GM12878 (cell line): ENCODE measurements at regions of chr2 and their contacts with region 1.

Region 1: DNA sequence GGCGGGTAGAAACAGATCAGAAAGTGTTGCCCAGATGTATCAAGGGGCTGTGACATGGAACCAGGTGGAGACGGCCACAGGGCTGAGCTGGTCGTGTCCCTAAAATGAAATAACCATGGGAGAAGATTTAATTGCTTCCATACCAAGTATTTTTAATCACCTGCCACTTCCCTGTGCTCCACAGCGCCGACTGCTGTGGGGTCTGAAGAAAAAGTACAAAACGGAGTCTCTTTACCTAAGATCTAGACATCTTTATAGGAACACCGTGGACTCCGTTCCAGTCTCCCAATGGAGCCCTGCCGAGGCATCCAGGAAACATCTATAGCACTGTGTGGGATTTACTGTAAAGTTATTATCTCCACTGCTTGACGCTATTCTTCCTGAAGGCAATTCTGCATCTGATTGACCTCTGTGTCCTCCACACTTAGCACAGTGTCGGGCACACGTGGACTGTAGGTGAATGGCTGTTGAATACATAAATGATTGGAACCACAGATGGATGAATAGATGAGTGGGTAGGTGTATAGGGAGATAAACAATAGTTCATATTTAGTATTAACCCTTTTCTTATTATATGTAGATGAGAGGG is 21.6 kb upstream of the GYPC start:
- DNase-seq: no peak
- ATAC-seq: peak; percentile 64
- H3K4me3 ChIP-seq: no peak overlapping the region
- H3K27ac ChIP-seq: no peak overlapping the region
- H3K4me1 ChIP-seq: no peaks in the 10 kb centered on the region
- H3K27me3 ChIP-seq: no peaks in the 10 kb centered on the region
- CTCF ChIP-seq: peak; percentile 61 to 69 (median 67); a peak in 5 of 6 replicates
- EP300 ChIP-seq: no peak
- POLR2A ChIP-seq: no peak
- RAD21 ChIP-seq: peak; percentile 65

Region 2: GRCh38 chr2:126299526-126299925 is 334.8 kb before region 1 on chr2:
- CTCF ChIA-PET with region 1: no interaction called
- POLR2A ChIA-PET with region 1: no interaction called
- RAD21 ChIA-PET with region 1: no interaction called
- SMC1A ChIA-PET with region 1: no interaction called
- in situ Hi-C with region 1: no loop called
- intact Hi-C with region 1: no loop called
- DNase-seq: no peak
- ATAC-seq: no peak
- H3K4me3 ChIP-seq: no peak overlapping the region
- H3K27ac ChIP-seq: no peak overlapping the region
- H3K4me1 ChIP-seq: no peaks in the 10 kb centered on the region
- H3K27me3 ChIP-seq: no peaks in the 10 kb centered on the region
- CTCF ChIP-seq: no peak
- EP300 ChIP-seq: no peak
- POLR2A ChIP-seq: no peak
- RAD21 ChIP-seq: no peak

Region 3: DNA sequence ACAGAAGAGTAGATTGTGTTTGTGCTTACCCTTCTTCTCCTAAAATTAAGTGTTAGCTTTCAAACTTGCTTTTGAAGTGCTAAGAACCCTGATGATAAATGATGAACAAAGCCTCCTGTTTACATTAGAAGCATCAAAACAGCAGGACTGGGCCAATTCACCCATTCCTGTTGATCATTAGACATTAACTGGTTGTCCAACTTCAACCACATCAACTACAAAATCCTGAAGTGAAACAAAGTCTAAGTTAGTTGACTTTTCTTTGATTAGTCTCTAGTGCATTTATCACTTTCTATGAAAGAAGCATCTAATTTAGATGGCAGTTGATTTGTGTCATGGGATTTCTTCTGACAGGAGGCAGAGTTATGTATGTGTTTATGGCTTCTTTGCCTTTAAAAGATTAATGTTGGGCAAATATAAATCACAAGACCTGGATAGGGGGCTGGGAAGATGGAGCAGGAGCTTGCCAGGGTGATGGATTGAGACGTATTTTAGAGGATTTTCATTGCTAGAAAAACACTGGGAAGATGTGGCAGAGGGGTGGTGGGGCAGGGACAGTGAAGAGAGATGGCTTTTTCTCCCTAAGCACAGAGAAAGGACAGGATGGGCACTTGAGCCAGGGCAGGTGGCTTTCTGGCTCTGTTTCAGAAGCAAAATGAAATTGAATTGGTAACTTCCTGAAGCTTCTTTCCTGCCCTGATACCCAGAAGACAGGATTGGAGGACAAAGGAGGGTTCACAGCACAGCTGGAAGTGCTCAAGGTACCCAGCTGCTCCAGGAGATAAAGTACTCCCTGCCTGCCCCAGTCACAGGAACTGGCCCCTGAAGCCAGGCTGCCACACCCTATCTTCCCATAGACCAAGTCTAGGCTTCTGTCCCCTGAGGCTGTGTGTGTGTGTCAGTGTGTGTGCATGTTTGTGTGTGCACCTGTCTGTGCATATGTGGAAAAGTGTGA is 42.1 kb after region 1 on chr2:
- CTCF ChIA-PET with region 1: no interaction called
- POLR2A ChIA-PET with region 1: no interaction called
- RAD21 ChIA-PET with region 1: no interaction called
- SMC1A ChIA-PET with region 1: no interaction called
- in situ Hi-C with region 1: no loop called
- intact Hi-C with region 1: loop called (anchors 1 kb)
- DNase-seq: no peak
- ATAC-seq: no peak
- H3K4me3 ChIP-seq: no peak overlapping the region
- H3K27ac ChIP-seq: no peak overlapping the region
- H3K4me1 ChIP-seq: no peaks in the 10 kb centered on the region
- H3K27me3 ChIP-seq: no peaks in the 10 kb centered on the region
- CTCF ChIP-seq: no peak
- EP300 ChIP-seq: no peak
- POLR2A ChIP-seq: no peak
- RAD21 ChIP-seq: no peak

Region 4: GRCh38 chr2:126898636-126899035 is 264.3 kb after region 1 on chr2 and contains the start of gene TEX51:
- CTCF ChIA-PET with region 1: no interaction called
- POLR2A ChIA-PET with region 1: no interaction called
- RAD21 ChIA-PET with region 1: no interaction called
- SMC1A ChIA-PET with region 1: no interaction called
- in situ Hi-C with region 1: no loop called
- intact Hi-C with region 1: no loop called
- DNase-seq: no peak
- ATAC-seq: no peak
- H3K4me3 ChIP-seq: no peak within 1 kb of the TSS
- H3K27ac ChIP-seq: no peak within 1 kb of the TSS
- H3K4me1 ChIP-seq: no peaks in the 10 kb centered on the region
- H3K27me3 ChIP-seq: no peaks in the 10 kb centered on the region; a peak in 1 of 4 replicates
- CTCF ChIP-seq: no peak
- EP300 ChIP-seq: no peak
- POLR2A ChIP-seq: no peak
- RAD21 ChIP-seq: no peak
- polyA plus RNA-seq, gene TEX51: not detected

Region 5: DNA sequence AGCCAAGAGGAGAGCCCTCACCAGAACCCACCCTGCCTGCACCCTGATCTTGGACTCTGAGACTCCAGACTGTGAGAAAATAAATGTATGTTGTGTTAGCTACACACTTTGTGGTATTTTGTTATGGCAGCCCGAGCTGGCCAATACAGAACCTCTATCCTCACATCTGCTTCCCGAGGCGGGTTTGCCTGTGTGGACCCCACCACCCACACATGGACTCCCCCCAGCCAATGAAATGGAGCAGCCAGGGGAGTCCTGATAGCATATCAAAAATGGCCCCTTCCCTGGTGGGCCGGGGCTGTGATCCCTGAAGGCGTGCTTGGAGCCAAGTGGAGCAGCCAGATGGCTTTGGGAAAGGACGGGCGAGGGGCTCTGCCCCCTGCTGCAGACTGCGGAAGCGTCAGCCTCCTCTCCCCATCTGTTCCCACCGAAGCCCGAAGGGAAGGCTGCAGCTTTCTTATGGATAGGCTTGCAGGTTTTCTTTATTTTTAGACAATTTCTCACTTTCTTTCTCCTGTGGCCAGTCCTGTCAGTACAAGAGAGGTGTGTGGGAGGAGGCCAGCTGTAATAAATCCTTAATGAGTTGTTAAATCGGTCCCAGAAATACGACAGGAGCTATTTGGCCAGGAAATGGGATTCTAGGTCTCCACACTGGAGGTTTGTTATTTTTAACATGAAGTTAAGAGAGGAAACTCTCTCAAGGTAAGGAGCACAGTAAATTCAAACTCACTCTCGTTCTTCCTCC is 298.8 kb after region 1 on chr2:
- CTCF ChIA-PET with region 1: no interaction called
- POLR2A ChIA-PET with region 1: no interaction called
- RAD21 ChIA-PET with region 1: no interaction called
- SMC1A ChIA-PET with region 1: no interaction called
- in situ Hi-C with region 1: no loop called
- intact Hi-C with region 1: no loop called
- DNase-seq: no peak
- ATAC-seq: no peak
- H3K4me3 ChIP-seq: no peak overlapping the region
- H3K27ac ChIP-seq: no peak overlapping the region
- H3K4me1 ChIP-seq: no peaks in the 10 kb centered on the region
- H3K27me3 ChIP-seq: no peaks in the 10 kb centered on the region; a peak in 1 of 4 replicates
- CTCF ChIP-seq: no peak
- EP300 ChIP-seq: no peak
- POLR2A ChIP-seq: no peak
- RAD21 ChIP-seq: no peak